Gastrocnemius medialis (tissue), 4 donors: ENCODE measurements at regions of chr5 and their contacts with region 1.

Region 1: DNA sequence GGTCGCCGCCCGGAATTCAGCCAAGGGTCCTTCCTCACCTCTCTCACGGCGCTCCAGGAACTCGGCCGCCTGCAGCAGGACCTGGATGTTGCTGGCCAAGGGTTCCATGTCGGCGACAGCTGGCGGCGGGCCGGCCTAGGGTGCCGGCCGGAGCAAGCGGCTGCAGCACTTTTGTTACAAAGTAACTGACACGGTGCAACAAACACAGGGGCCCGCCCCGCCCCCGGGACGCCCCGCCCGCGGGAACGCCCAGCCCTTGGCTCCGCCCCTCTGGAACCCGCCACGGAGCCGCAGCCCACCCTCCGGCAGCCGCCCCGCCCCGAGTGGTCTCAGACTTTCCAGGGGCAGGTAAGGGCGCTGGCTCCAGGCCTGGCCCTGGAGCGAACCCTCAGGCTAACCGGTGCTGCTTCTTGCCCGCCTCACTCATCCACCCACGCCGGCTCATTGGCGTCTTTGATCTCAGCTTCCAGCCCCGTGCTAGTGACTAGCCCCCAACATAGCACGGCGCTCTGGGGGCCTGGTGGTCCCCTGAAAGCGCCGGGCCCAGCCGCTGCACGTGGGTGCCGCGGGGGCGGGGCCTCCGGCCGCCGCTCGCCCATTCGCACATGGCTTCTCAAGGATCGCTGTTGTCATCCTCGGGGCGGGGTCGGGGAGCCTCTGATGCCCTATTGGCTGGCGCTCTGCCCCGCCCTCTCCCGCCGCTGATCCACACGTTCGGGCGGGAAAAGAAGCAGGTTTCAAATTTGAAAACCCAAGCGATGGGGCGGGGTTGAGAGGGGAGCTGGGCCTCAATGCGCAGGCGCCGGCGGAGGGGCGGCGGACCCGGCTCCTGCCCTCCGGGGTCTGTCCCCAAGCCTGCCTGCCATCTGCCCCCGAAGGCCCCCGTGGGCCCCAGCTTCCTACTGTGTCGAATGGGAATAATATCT is at the start of gene MXD3:
- DNase-seq: peak; percentile 96 to 97
- ATAC-seq: peak; percentile 85 to 90
- H3K4me3 ChIP-seq: peak within 1 kb of the TSS; percentile 60 to 96 (median 78)
- H3K27ac ChIP-seq: peak within 1 kb of the TSS; percentile 58 to 83 (median 78)
- H3K4me1 ChIP-seq: peaks cover 27 to 28% of the 10 kb centered on the region in 2 donors
- H3K27me3 ChIP-seq: no peaks in the 10 kb centered on the region
- CTCF ChIP-seq: no peak
- POLR2A ChIP-seq: no peak
- total RNA-seq, gene MXD3: 0.90 to 7.8 (median 3.5) TPM

Region 2: GRCh38 chr5:177368869-177369644 is 57.1 kb after region 1 on chr5:
- in situ Hi-C with region 1: no loop called
- intact Hi-C with region 1: loop called (anchors 5 kb)
- DNase-seq: no peak
- ATAC-seq: no peak
- H3K4me3 ChIP-seq: no peak overlapping the region
- H3K27ac ChIP-seq: peak overlapping the region; percentile 74 to 83 (median 79)
- H3K4me1 ChIP-seq: peaks cover 35 to 39% of the 10 kb centered on the region in 2 donors
- H3K27me3 ChIP-seq: no peaks in the 10 kb centered on the region
- CTCF ChIP-seq: peak in 4 of 5 experiments; percentile 34 to 62 (median 52)
- POLR2A ChIP-seq: no peak

Region 3: GRCh38 chr5:178958774-178959173 is 1646.8 kb after region 1 on chr5:
- in situ Hi-C with region 1: no loop called
- intact Hi-C with region 1: no loop called
- DNase-seq: no peak
- ATAC-seq: no peak
- H3K4me3 ChIP-seq: no peak overlapping the region
- H3K27ac ChIP-seq: no peak overlapping the region
- H3K4me1 ChIP-seq: no peaks in the 10 kb centered on the region
- H3K27me3 ChIP-seq: no peaks in the 10 kb centered on the region
- CTCF ChIP-seq: no peak
- POLR2A ChIP-seq: no peak